ENCODE measurements at regions of chr22 and their contacts with region 1.

Region 1: DNA sequence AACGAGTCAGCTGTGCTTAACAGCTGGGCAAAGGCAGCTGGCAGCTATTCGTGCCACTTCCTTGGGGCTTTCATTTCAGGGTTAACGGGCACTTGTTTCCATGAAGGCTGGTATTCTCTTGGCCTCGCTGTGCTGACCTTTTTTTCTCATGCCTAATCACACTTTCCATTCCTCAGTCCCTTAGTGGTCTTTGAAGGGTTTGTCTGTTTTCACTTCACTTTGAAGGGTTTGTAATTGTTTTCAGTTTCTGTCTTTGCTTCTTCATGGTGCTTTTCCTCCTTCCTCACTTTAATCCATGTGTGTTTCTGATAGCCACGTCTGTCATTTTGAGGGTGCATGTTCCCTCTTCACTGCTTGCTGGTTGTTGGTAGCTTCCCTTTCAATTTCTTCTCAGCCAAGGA is 24.6 kb downstream of the PPIL2 start:
- DNase-seq: no peak
- H3K4me3 ChIP-seq: no peak overlapping the region
- H3K27ac ChIP-seq: no peak overlapping the region
- H3K4me1 ChIP-seq: no peaks in the 10 kb centered on the region
- H3K27me3 ChIP-seq: no peaks in the 10 kb centered on the region
- CTCF ChIP-seq: no peak

Region 2: DNA sequence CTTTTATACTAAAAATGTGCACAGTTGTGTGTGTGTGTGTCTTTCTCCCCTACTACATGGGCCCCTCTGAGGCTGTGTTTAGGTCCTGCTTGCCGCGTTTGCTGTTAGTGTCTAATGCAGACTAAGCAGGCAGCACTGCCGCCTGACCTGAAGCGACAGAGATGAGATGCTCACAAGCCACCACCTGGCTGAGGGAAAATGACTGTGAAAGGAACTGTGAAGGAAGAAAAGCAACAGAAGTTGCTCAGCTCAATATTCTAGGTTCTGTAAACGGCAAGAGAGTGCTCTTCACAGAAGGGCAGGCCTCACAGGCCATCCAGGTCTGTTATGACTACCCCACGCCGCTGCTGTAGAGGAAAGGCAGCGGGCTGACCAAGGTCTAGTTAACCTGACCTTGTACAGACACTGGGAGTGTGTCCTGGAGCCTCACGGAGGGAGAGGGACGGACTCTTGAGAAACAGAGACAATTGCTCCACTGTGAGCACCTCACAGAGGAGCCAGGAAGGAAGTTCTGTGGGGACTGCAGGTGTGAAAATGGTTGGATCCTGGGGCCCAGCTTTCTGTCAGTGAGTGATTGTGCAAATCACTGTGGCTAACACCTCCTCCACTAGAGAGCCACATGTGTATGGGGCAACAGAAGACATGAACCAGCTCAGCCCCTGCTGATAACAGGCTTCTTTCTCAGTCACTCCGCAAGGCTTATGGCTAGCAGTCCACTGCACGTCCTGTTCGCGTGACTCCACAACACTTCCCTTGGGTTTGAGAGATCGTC is 76.5 kb after region 1 on chr22:
- CTCF ChIA-PET with region 1: no interaction called
- POLR2A ChIA-PET with region 1: no interaction called
- intact Hi-C with region 1: no loop called
- DNase-seq: no peak
- H3K4me3 ChIP-seq: no peak overlapping the region
- H3K27ac ChIP-seq: no peak overlapping the region
- H3K4me1 ChIP-seq: no peaks in the 10 kb centered on the region
- H3K27me3 ChIP-seq: no peaks in the 10 kb centered on the region
- CTCF ChIP-seq: no peak

Region 3: DNA sequence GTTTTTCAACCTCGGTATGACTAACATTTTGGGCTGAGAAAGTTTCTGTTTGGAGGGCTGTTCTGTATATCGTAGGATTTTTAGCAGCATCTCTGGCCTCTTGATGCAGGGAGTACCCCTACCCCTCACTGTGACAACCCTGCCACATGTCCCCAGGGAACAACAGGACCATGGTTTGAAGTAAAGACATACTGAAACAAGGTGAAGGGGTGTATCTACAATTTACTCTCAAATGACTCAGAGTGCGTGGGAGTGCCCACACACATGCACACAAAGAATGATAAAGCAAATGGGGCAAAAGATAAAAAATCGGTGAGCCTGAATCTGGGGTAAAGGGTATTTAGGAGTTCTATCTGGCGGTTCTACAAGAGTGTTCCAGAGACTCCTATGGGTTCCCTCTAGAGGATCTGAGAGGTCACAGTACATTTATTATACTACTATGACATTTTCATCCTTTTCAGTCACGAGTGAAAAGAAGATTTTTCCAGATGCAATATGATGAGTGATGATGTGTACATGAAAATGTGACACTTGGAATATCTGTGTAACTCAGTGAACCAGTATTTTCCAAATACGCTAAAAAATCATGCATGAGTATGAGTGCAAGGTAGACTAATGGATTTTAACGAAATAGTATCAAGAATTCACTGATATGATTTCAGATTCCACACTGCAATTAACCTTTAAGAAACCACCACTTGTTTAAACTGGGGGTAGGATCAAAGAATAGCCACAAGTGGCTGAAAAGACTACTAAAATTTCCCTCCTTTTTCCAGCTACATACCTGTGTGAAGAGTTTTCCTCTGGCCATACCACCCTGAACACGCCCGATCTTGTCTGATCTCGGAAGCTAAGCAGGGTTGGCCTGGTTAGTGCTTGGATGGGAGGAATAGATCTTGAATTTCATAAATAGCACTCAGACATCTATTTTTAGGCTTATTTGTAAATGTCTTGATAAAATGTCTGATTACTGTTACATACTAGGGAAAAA is 101.5 kb after region 1 on chr22:
- CTCF ChIA-PET with region 1: no interaction called
- POLR2A ChIA-PET with region 1: interaction called, 12 read pairs
- intact Hi-C with region 1: no loop called
- DNase-seq: no peak
- H3K4me3 ChIP-seq: no peak overlapping the region
- H3K27ac ChIP-seq: no peak overlapping the region
- H3K4me1 ChIP-seq: no peaks in the 10 kb centered on the region
- H3K27me3 ChIP-seq: no peaks in the 10 kb centered on the region
- CTCF ChIP-seq: no peak

Measured in A673 (cell line).